ENCODE measurements at regions of chr15 and their contacts with region 1.

Region 1: GRCh38 chr15:90412356-90413194 is 24.5 kb downstream of the IQGAP1 start:
- H3K4me3 ChIP-seq: no peak overlapping the region
- H3K27ac ChIP-seq: no peak overlapping the region
- H3K4me1 ChIP-seq: peaks cover 29% of the 10 kb centered on the region
- CTCF ChIP-seq: no peak

Region 2: DNA sequence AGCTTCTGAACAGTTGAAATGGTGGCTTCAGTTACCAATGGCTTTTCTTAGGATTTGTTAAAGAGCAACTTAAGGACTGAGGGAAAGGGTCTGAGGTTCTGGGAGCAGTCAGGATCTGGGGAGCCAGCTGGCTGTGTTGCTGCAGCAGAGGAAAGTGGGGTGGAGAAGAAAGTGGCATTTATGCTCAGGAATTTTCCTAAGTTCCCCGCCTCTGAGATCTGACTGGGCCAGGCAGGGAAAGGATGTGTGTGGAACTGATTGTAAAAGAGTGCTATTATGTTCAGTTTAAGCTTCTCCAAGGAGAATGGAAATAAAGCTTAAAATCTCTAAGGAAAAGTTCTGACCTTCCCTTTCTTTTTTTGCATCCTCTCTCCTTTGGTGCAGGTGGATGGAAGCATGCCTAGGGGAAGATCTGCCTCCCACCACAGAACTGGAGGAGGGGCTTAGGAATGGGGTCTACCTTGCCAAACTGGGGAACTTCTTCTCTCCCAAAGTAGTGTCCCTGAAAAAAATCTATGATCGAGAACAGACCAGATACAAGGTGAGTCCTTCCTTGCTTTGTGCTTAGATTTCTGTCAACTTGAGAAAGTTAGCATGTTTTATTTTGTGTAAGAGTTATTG is 13.3 kb after region 1 on chr15:
- CTCF ChIA-PET with region 1: interaction called, 18 read pairs
- POLR2A ChIA-PET with region 1: no interaction called
- H3K4me3 ChIP-seq: no peak overlapping the region
- H3K27ac ChIP-seq: no peak overlapping the region
- H3K4me1 ChIP-seq: peaks cover 12% of the 10 kb centered on the region; the same call in 1 of the 2 replicates
- CTCF ChIP-seq: no peak

Measured in HEK293 (cell line).